Activated T-helper 1 cell treated with anti-CD3 and anti-CD28 coated beads, Interleukin-12 subunit alpha, Interleukin-12 subunit beta, Interleukin-2, Interleukin-4 antibody, amounts not matched to agents 30 ng/mL and 10 ng/mL and 1 ng/mL, durations not matched to agents 14 hours and 24 hours and 36 hours (primary cell): ENCODE measurements at regions of chr19 and their contacts with region 1.

Region 1: DNA sequence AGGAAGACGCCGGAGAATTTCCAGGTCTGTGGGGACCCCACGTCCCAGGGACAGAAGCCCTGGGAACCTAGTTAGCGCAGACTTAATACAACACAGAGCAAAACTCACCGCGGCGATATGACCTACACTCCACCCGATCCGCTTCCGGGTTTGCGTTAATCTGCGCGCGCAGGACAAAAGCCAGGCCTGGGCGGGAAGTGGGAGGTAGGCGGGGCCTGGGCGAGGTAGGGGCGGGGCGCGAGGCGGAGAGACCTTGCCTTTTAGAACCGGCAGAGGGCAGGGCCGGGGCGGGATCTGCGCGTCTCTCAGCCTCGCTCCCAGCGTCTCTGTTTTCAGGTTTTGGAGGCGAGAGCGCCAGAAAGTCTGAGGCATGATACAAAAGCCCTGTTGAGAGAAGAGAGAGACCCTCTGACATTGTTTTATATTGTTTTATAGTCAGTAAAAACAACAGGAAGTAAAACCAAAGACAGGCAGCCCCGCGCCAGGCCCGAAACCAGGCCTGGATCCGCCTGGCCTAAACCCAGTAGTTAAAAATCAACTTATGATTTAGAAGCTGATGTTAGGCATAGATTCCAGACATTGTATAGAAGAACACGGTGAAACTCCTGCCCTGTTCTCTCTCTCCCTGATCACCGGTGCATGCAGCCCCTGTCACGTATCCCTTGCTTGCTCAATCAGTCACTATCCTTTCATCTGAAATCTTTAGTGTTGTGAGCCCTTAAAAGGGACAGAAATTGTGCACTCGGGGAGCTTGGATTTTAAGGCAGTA is at the start of gene ZNF611:
- DNase-seq: peak; percentile 97
- H3K4me3 Mint-ChIP-seq: peak within 1 kb of the TSS; percentile 91
- H3K27ac Mint-ChIP-seq: peak within 1 kb of the TSS; percentile 92
- H3K4me1 Mint-ChIP-seq: peaks cover 27% of the 10 kb centered on the region
- H3K27me3 Mint-ChIP-seq: no peaks in the 10 kb centered on the region
- total RNA-seq, gene ZNF611: 17.0 and 21.0 TPM in 2 replicates

Region 2: GRCh38 chr19:52171321-52172169 is 563.5 kb before region 1 on chr19 and contains the start of gene ZNF836:
- intact Hi-C with region 1: loop called (anchors 1 kb)
- DNase-seq: peak; percentile 83
- H3K4me3 Mint-ChIP-seq: peak within 1 kb of the TSS; percentile 97
- H3K27ac Mint-ChIP-seq: peak within 1 kb of the TSS; percentile 90
- H3K4me1 Mint-ChIP-seq: peaks cover 11% of the 10 kb centered on the region
- H3K27me3 Mint-ChIP-seq: no peaks in the 10 kb centered on the region
- total RNA-seq, gene ZNF836: 7.8 and 10.8 TPM in 2 replicates

Region 3: GRCh38 chr19:52601025-52601973 is 133.8 kb before region 1 on chr19:
- intact Hi-C with region 1: loop called (anchors 1 kb)
- DNase-seq: peak; percentile 89
- H3K4me3 Mint-ChIP-seq: peak overlapping the region; percentile 89
- H3K27ac Mint-ChIP-seq: peak overlapping the region; percentile 64
- H3K4me1 Mint-ChIP-seq: peaks cover 12% of the 10 kb centered on the region
- H3K27me3 Mint-ChIP-seq: no peaks in the 10 kb centered on the region

Region 4: DNA sequence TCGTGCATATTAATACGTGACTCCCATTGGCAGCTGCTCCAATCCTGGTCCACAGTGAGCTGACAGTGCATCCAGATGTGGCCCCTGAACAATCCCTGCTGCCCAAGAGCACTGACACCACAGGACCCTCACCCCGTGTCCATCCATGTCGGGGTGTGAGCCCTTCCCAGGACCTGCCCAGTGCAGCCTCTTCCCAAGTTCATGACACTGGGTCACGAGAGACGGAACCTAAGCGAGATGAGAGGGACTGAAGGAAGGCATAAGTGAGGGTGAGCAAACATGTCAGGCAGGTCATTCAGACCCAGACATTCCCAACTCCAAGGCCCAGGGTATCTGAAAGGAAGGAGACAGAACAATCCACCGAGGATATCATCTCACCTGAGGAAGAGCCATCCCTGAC is 118.8 kb after region 1 on chr19:
- intact Hi-C with region 1: loop called (anchors 2 kb)
- DNase-seq: no peak
- H3K4me3 Mint-ChIP-seq: no peak overlapping the region
- H3K27ac Mint-ChIP-seq: no peak overlapping the region
- H3K4me1 Mint-ChIP-seq: peaks cover 22% of the 10 kb centered on the region
- H3K27me3 Mint-ChIP-seq: no peaks in the 10 kb centered on the region

Region 5: GRCh38 chr19:52942386-52943133 is 207.5 kb after region 1 on chr19:
- intact Hi-C with region 1: loop called (anchors 1 kb)
- DNase-seq: peak; percentile 94
- H3K4me3 Mint-ChIP-seq: peak overlapping the region; percentile 89
- H3K27ac Mint-ChIP-seq: peak overlapping the region; percentile 88
- H3K4me1 Mint-ChIP-seq: peaks cover 27% of the 10 kb centered on the region
- H3K27me3 Mint-ChIP-seq: peaks cover 2% of the 10 kb centered on the region